CD8-positive, alpha-beta T cell (primary cell): ENCODE measurements at regions of chr9 and their contacts with region 1.

Region 1: DNA sequence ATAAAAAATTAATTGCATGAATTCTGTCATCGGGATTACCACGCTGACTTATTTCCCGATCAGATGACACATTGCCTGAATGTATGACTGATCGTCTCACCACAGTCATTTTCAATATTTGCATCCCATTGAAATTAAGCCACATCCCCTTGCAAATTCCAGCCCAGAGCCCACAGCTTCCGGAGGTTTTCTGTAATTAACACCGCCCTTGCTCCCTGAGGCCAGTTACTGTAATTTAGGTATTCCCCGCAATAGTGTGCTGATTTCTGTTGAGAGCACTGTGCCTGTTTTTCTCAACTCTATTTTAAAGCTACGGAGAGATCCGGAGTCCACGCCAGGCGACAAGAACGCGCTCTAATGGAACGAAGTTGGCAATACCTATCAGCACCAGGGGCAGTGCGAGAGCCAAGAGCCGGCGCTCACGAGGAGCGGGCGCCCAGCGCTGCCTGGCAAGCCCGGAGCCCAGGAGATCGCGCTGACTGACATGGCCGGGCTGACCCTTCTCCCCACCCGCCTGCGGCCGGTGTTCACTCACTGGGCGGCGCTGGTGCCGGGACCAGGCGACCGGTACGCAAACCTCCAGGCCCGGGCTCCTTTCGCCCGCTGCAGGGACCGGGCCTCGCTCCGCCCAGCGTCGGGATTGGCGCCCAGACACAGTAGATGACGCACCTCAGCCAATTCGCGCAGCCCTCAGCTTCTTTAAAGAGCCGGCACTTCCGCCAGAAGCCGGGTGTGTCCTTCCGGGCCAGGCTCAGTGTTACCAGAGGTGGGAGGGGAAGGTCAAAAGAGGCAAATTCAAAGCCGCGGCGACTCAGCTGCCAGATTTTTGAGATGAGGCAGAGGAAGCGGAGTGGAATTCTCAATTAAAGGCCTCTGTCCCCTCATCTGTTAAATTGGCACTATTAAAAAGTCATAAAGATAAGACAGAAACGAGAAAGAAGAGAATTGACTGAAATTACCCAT is at the start of gene PLGRKT:
- DNase-seq: peak; percentile 76 to 96 (median 90)
- ATAC-seq: peak; percentile 96
- H3K4me3 ChIP-seq: peak within 1 kb of the TSS; percentile 71 to 76
- H3K4me3 Mint-ChIP-seq: peak within 1 kb of the TSS; percentile 89
- H3K27ac ChIP-seq: peak within 1 kb of the TSS; percentile 89 to 90
- H3K27ac Mint-ChIP-seq: peak within 1 kb of the TSS; percentile 96
- H3K4me1 ChIP-seq: peaks cover 23% of the 10 kb centered on the region
- H3K4me1 Mint-ChIP-seq: peaks cover 36% of the 10 kb centered on the region
- H3K27me3 ChIP-seq: no peaks in the 10 kb centered on the region
- H3K27me3 Mint-ChIP-seq: no peaks in the 10 kb centered on the region
- CTCF ChIP-seq: peak; percentile 10
- total RNA-seq, gene PLGRKT: 10.1 to 12.8 TPM

Region 2: DNA sequence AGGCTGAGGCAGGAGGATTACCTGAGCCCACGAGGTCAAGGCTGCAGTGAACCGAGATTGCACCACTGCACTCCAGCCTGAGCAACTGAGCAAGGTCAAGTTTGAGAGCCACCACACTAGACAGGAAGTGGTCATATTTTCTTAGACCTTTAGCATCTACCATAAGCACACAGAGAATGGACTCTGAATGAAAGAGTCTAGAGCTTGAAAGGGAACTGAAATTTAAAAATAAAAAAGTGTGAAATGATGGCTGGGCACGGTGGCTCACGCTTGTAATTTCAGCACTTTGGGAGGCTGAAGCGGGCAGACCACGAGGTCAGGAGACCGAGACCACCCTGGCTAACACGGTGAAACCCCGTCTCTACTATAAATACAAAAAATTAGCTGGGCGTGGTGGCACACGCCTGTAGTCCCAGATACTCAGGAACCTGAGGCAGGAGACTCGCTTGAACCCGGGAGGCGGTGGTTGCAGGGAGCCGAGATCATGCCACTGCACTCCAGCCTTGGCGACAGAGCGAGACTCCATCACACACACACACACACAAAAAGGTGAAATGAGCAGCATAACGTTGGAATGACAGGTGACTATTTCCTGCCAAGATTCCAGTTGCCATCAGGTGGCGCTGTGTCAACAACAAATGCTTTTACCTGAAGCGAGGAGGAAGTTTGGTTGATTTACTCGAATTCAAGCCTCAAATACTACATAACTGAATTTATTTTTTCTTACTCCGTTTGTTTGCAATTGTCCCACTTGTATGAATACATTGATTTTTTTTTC is 675.2 kb before region 1 on chr9:
- CTCF ChIA-PET with region 1: no interaction called
- POLR2A ChIA-PET with region 1: no interaction called
- intact Hi-C with region 1: loop called in 1 of 2 experiments (anchors 5 kb)
- DNase-seq: peak; percentile 61 to 87 (median 80)
- ATAC-seq: peak; percentile 80
- H3K4me3 ChIP-seq: no peak overlapping the region
- H3K4me3 Mint-ChIP-seq: peak overlapping the region; percentile 47
- H3K27ac ChIP-seq: no peak overlapping the region
- H3K27ac Mint-ChIP-seq: no peak overlapping the region
- H3K4me1 ChIP-seq: no peaks in the 10 kb centered on the region
- H3K4me1 Mint-ChIP-seq: peaks cover 10% of the 10 kb centered on the region
- H3K27me3 ChIP-seq: peaks cover 0 to 6% of the 10 kb centered on the region in 2 experiments
- H3K27me3 Mint-ChIP-seq: peaks cover 9% of the 10 kb centered on the region
- CTCF ChIP-seq: peak; percentile 87

Region 3: DNA sequence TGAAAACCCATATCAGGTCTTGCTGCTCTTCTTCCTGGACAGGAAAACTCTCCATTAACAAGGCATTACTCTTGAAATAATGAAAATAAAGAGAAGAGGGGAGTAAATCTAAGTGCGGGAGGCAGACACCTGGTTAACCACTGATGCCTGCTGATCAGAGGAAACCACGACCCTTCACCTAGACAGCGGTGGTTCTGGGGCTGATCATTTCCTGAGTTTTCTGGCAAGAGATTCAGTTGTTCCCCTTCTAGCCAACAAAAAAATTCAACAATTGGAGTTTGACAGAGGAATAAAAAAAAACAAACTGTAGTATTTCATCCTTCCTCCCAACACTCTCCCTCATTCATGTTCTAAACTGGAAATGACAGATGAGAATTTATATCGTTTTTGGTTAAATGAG is 136.0 kb before region 1 on chr9:
- CTCF ChIA-PET with region 1: no interaction called
- POLR2A ChIA-PET with region 1: no interaction called
- intact Hi-C with region 1: loop called in 1 of 2 experiments (anchors 10 kb)
- DNase-seq: peak in 3 of 9 experiments; percentile 23 to 43 (median 26)
- ATAC-seq: no peak
- H3K4me3 ChIP-seq: no peak overlapping the region
- H3K4me3 Mint-ChIP-seq: peak overlapping the region; percentile 58
- H3K27ac ChIP-seq: no peak overlapping the region
- H3K27ac Mint-ChIP-seq: peak overlapping the region; percentile 45
- H3K4me1 ChIP-seq: peaks cover 15% of the 10 kb centered on the region
- H3K4me1 Mint-ChIP-seq: peaks cover 26% of the 10 kb centered on the region
- H3K27me3 ChIP-seq: no peaks in the 10 kb centered on the region
- H3K27me3 Mint-ChIP-seq: no peaks in the 10 kb centered on the region
- CTCF ChIP-seq: no peak

Region 4: GRCh38 chr9:5450359-5451091 is 13.0 kb after region 1 on chr9 and contains the start of gene CD274:
- CTCF ChIA-PET with region 1: interaction called, 14 read pairs
- POLR2A ChIA-PET with region 1: interaction called, 35 read pairs
- intact Hi-C with region 1: loop called (anchors 1 kb)
- DNase-seq: peak; percentile 53 to 92 (median 74)
- ATAC-seq: peak; percentile 93
- H3K4me3 ChIP-seq: peak within 1 kb of the TSS; percentile 60 to 91
- H3K4me3 Mint-ChIP-seq: peak within 1 kb of the TSS; percentile 88
- H3K27ac ChIP-seq: peak within 1 kb of the TSS; percentile 94 to 96
- H3K27ac Mint-ChIP-seq: peak within 1 kb of the TSS; percentile 95
- H3K4me1 ChIP-seq: peaks cover 17% of the 10 kb centered on the region
- H3K4me1 Mint-ChIP-seq: peaks cover 51% of the 10 kb centered on the region
- H3K27me3 ChIP-seq: no peaks in the 10 kb centered on the region
- H3K27me3 Mint-ChIP-seq: no peaks in the 10 kb centered on the region
- CTCF ChIP-seq: peak; percentile 55
- total RNA-seq, gene CD274: 3.4 to 3.7 TPM

Region 5: DNA sequence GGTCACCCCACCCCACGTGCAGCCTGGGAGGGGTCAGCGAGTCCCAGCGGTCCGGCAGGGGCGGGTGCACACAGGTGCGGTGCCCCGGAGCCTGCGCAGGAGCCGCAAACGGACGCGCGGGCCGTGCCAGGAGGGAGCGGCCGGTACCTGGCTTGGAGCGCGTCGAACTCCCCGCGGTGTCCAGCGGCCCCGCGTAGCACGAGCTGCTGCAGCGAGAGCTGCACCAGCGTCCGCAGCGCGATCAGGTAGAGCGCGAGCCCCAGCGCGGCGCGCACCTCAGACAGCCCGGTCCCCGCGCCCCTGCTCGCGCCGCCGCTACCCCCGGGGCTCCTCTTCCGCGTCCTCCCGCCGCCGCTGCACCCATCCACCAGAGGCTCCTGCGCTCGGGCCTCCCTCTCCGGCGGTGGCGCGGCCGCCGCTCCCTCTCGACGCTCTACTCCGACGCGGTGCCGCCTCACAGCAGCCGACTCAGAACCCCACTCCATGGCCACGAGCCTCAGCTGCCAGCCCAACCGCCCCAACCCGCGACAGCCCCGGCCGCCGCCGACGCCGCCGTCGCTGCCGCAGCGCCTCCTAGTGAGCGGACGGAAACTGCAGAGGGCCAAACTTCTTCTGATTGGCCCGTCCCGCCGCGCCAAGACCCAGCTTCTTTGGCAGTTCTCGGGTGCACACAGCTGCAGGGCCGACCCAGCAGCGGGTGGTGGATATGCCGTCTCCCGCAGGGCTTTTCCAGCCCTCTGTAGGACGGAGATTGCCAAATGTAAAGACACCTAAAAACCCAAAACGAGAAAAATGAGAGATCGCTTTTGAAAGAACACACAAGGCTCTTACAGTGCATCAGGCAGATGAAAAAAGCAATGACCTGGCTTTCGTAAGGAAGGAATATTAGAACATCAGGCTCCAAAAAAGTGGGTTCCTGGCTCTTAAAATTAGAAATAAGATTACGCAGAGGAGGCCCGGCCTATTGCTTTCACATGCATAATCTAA is 395.3 kb after region 1 on chr9 and contains the start of gene ERMP1:
- CTCF ChIA-PET with region 1: no interaction called
- POLR2A ChIA-PET with region 1: no interaction called
- intact Hi-C with region 1: loop called in 1 of 2 experiments (anchors 5 kb)
- DNase-seq: peak; percentile 85 to 95 (median 92)
- ATAC-seq: peak; percentile 87
- H3K4me3 ChIP-seq: peak within 1 kb of the TSS; percentile 57 to 91
- H3K4me3 Mint-ChIP-seq: peak within 1 kb of the TSS; percentile 96
- H3K27ac ChIP-seq: peak within 1 kb of the TSS in 1 of 2 experiments; percentile 41
- H3K27ac Mint-ChIP-seq: peak within 1 kb of the TSS; percentile 88
- H3K4me1 ChIP-seq: peaks cover 34% of the 10 kb centered on the region
- H3K4me1 Mint-ChIP-seq: peaks cover 66% of the 10 kb centered on the region
- H3K27me3 ChIP-seq: no peaks in the 10 kb centered on the region
- H3K27me3 Mint-ChIP-seq: no peaks in the 10 kb centered on the region
- CTCF ChIP-seq: peak; percentile 83
- total RNA-seq, gene ERMP1: 5.2 to 7.9 TPM

Region 6: GRCh38 chr9:6412487-6413364 is 975.2 kb after region 1 on chr9 and contains the start of gene UHRF2:
- CTCF ChIA-PET with region 1: no interaction called
- POLR2A ChIA-PET with region 1: no interaction called
- intact Hi-C with region 1: loop called in 1 of 2 experiments (anchors 5 kb)
- DNase-seq: peak; percentile 98 to 99 (median 99)
- ATAC-seq: peak; percentile 88
- H3K4me3 ChIP-seq: peak within 1 kb of the TSS; percentile 58 to 74
- H3K4me3 Mint-ChIP-seq: peak within 1 kb of the TSS; percentile 87
- H3K27ac ChIP-seq: peak within 1 kb of the TSS; percentile 80 to 83
- H3K27ac Mint-ChIP-seq: peak within 1 kb of the TSS; percentile 93
- H3K4me1 ChIP-seq: peaks cover 28% of the 10 kb centered on the region
- H3K4me1 Mint-ChIP-seq: peaks cover 34% of the 10 kb centered on the region
- H3K27me3 ChIP-seq: no peaks in the 10 kb centered on the region
- H3K27me3 Mint-ChIP-seq: no peaks in the 10 kb centered on the region
- CTCF ChIP-seq: no peak
- total RNA-seq, gene UHRF2: 140 to 159 TPM